Right ventricle myocardium inferior (tissue), 1 donor: ENCODE measurements at regions of chr9 and their contacts with region 1.

Region 1: GRCh38 chr9:98867429-98868168 is 60.1 kb downstream of the GALNT12 start:
- DNase-seq: peak; percentile 88
- ATAC-seq: peak; percentile 85

Region 2: DNA sequence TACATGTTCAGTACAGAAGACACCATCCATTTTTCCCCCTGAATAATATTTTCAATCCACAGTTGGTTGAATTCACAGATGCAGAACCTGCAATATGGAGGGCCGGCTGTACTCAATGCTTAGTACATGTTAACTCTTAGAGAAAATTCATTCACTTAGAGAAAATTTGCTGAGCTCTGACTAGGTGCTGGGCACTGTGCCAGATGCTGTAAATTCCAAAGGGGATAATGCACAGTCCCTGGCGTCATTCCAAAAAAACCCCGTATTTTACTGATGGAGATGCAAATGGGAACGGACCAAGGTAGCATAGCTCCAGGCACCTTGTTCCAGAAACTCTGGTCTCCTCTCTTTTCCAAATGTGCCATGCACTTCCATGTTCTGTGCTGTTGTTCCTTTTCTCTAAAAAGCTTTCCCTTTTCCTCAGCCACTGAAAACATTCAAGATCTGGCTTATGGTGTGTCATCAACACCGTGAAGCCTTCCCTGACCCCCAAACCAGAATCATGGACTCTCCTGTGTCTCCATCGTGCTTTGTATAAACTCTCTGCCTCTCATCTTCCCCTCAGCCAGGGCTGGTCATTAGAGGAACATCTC is 20.4 kb after region 1 on chr9:
- intact Hi-C with region 1: loop called (anchors 2 kb)
- DNase-seq: no peak
- ATAC-seq: no peak

Region 3: DNA sequence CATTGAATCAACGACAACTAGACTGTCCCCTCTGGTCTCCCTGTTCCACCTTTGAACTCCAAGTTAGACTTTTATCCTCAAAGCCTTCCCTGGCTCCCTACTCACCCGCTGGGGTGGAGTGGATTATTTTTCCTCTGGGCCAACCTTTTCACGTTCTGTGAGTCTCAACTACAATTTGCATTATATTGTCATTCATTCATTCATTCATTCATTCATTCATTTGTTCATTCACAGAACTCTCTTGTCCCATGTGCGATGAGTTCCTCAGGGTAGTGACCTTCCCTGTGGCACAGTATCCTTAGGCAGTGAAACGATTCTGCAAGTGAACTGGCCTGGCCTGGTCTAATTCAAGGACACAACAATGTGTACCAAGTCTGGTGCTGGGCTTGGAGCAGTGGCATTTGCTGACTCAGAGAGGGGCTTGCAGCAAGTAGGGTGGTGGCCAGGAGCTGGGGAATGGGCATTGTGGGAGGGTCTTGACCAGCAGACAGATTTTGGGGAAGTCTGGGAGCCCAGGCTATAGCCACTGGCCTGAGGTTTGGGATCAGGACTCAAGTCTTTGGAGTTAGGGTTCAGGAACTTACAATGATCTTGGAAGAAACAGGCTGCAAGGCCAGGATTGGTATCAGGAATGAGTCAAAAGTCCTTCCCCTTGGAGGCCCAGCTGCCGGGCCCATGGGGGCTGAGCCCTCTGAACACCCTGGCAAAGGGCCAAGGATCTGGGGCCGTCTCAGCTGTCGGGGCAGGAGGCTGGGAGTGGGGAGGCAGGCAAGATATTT is 38.9 kb after region 1 on chr9:
- intact Hi-C with region 1: loop called (anchors 2 kb)
- DNase-seq: peak; percentile 81
- ATAC-seq: no peak